A673 (cell line): ENCODE measurements at regions of chr14 and their contacts with region 1.

Region 1: DNA sequence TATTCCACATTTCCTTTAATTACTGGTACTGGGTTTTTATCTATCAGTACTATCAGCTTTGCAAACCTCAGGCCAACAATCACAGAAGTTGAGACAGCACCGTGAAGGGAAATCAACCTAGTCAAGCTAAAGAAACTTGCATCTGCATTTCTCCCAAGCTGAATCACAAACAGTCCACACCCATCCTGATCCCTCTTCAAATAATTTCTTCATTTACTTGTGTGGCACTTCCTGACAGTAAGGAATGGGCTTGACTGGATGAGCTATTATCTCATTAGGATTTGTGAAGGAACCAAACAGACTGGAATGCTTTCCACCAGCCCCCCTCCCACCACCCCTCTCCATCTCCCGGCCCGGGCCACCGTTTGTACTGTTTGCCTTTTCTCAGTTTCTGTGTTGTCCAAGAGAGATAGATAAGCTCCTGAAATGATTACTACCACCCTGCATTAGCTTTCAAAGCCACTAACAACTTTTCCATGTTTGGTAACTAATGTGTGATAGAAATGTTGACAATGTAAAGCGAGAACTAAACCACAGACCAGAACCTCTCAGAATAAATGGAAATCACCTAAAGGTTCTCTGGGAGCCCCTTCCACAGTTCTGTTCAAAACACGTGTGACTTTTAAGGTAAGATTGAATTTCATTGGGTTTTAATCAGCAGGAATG is 236.3 kb downstream of the SLC25A21 start:
- DNase-seq: no peak
- H3K4me3 ChIP-seq: no peak overlapping the region
- H3K27ac ChIP-seq: no peak overlapping the region
- H3K4me1 ChIP-seq: peaks cover 52% of the 10 kb centered on the region
- H3K27me3 ChIP-seq: no peaks in the 10 kb centered on the region
- CTCF ChIP-seq: no peak

Region 2: DNA sequence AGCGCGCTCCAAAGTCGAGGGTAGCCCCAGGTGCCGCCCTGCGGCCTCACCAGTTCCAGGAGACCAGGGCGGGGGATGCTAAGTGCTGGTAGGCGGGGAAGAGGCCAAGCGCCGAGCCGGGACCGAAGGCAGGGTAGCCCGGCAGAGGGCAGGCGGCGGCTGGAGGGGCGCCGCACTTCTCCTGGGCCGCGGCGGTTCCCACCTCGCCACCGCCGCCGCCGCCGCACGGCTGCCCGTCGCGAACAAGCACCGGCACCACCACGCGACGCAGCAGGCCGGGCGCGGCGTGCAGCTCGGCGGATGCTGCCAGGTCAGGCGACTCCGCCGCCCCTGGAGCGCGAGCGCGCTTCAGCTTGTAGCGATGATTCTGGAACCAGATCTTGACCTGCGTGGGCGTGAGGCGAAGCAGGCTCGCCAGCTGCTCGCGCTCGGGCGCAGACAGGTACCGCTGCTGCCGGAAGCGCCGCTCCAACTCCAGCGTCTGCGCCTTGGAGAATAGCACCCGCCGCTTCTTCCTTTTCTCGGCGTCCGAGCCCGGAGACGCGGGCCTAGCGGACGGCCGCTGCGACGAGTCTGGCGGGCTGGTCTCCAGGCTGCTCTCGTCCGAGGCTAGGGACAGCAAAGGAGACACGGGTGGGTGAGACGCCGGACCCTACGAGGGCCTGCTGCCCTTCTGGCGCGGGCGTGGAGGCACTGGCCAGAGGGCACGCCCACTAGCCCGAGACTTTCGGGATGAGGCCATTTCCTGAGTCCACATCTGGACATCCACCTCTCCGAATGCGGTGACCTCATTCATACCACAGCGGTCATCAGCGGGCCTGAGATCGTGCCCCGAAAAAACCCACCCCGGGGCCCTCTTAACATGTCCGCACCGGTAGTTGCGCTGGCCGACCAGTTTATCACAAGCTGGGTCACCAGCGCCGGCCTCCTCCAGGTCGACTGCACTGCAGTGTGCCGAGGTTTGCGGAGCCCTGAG is 355.0 kb before region 1 on chr14:
- CTCF ChIA-PET with region 1: interaction called, 14 read pairs
- POLR2A ChIA-PET with region 1: no interaction called
- intact Hi-C with region 1: no loop called
- DNase-seq: peak; percentile 37
- H3K4me3 ChIP-seq: peak overlapping the region; percentile 55
- H3K27ac ChIP-seq: no peak overlapping the region
- H3K4me1 ChIP-seq: peaks cover 7% of the 10 kb centered on the region
- H3K27me3 ChIP-seq: peaks cover 57% of the 10 kb centered on the region
- CTCF ChIP-seq: no peak

Region 3: DNA sequence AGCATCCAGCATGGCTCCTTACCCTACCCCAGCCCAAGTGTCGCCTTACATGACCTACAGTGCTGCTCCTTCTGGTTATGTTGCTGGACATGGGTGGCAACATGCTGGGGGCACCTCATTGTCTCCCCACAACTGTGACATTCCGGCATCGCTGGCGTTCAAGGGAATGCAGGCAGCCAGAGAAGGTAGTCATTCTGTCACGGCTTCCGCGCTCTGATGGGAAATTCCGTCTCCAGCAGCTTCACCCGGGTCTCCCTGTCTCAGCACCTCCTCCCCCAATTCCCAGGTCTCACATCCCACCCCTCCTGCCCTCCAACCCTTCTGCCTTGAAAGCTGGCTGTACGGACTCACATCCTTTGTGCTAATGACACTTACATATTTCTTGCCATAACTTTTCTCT is 259.9 kb before region 1 on chr14:
- CTCF ChIA-PET with region 1: no interaction called
- POLR2A ChIA-PET with region 1: no interaction called
- intact Hi-C with region 1: no loop called
- DNase-seq: no peak
- H3K4me3 ChIP-seq: no peak overlapping the region
- H3K27ac ChIP-seq: no peak overlapping the region
- H3K4me1 ChIP-seq: no peaks in the 10 kb centered on the region
- H3K27me3 ChIP-seq: no peaks in the 10 kb centered on the region
- CTCF ChIP-seq: no peak

Region 4: DNA sequence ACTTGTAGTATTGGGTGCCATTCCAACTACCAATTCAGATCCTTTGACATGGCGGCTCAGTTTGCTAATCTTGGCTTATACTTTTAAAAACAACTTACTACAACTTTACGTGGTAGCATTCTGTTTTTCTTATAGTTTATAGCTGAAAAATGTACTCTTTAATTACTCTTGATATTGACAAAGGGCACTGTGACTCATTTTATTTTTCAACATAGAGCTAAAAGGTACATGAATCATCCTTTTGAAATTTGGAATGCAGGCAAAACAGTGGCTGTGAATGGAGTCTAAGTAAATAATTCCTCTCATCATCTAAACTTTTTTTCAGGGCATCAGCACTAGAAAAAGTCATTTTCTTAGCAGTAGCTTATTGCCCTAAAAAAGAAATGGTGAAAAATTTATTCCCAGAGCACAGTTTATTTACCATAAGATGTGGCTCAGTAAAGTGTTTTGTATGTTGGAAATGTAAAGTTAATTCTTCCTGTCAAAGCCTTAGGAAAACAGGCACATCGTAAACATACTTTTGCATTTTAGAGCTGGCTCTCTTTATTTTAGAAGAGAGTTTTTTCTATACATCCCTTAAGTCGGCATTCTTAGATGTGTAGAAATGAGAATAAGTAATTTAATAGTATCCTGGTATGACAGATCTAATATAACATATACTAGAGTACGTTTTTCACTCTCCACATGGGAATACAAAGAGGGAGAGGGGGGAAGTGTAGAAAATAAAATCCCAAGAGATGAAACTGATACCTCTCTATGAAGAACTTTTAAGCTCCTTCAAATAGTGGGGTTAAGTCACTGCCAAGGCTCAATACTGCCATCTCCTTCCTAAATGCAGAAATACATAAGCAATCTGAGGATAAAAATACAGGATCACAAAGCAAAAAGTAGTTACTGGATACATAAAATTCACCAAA is 181.0 kb after region 1 on chr14:
- CTCF ChIA-PET with region 1: no interaction called
- POLR2A ChIA-PET with region 1: no interaction called
- intact Hi-C with region 1: loop called (anchors 5 kb)
- DNase-seq: peak; percentile 85
- H3K4me3 ChIP-seq: no peak overlapping the region
- H3K27ac ChIP-seq: no peak overlapping the region
- H3K4me1 ChIP-seq: peaks cover 10% of the 10 kb centered on the region
- H3K27me3 ChIP-seq: no peaks in the 10 kb centered on the region
- CTCF ChIP-seq: peak; percentile 74